ENCODE measurements at regions of chr12 and their contacts with region 1.

Region 1: DNA sequence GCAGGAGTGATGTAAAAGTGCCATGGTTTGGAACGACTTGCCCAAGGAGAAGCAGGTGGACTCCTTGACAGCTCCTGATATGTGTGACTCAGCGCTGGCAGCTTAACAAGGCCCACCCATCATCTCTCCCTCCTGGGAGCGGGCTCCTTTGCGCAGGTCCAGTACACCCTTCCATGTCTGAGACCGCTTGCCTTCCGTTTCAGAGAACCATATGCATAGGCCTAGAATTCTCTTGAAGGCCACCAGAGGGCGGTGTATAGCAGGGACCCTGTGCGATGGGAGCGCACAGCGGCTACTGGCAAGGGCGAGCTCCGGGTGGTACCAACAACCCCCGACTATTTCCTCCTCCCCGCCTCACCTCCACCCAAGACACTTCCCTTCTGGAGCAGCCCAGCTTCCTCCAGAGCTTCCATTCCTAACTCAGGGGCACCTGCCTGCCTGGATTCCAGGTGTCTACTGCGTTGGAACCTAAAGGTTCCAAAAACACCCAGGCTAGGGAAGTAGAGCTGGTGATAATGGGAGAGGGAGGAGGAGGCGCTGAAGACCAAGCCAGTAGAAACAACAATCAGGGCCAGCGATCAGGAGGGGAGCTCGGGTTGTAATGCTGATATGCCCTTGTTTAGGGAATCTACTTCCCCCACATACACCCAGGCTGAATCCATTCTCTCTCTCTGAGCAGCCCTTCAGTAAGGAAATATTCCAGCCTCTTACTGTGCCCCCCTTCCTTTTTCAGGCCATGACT is 6.2 kb downstream of the DHH start:
- DNase-seq: peak; percentile 67
- H3K4me3 Mint-ChIP-seq: peak overlapping the region; percentile 42
- H3K27ac Mint-ChIP-seq: no peak overlapping the region
- H3K4me1 Mint-ChIP-seq: peaks cover 57% of the 10 kb centered on the region
- H3K27me3 Mint-ChIP-seq: peaks cover 38% of the 10 kb centered on the region

Region 2: DNA sequence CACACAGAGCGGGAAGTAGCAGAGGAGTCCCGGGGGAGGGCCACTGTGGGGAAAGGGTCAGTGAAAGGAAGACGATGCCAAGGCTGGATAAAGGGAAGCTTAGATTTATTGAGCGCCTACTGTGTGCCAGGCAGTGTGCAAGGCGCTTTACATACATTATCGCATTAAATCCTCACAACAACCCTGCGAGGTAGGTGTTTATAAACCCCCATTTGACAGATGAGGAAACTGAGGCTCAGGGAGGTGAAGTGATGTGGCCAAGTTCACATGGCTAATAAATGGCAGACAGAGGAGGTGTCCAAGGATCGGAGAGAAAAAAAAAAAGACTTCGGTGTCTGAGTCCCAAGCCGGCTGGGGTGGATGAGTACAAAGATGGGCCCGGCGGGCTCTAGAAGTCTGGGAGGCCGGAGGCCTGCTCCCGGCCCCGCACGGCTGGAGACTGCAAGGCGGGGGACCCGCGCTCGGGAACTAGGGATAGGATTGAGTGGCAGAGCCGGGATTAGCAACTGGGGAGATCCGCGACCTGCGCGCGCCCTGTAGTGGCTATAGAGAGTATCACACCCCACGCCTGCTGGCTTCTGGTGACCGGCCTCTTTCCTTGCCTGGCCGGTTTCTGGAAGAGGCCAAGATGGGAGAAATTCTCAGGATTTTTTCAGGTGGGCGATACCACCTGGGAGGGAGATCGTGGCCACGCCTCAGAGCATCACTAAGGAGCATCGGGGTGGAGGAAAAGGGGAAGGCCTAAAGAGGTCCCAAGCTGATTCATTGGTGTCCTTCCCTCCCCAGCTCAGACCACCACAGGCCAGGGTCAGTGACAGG is 93.1 kb before region 1 on chr12:
- intact Hi-C with region 1: loop called (anchors 1 kb)
- DNase-seq: peak; percentile 39
- H3K4me3 Mint-ChIP-seq: no peak overlapping the region
- H3K27ac Mint-ChIP-seq: peak overlapping the region; percentile 52
- H3K4me1 Mint-ChIP-seq: peaks cover 25% of the 10 kb centered on the region
- H3K27me3 Mint-ChIP-seq: peaks cover 49% of the 10 kb centered on the region

Region 3: DNA sequence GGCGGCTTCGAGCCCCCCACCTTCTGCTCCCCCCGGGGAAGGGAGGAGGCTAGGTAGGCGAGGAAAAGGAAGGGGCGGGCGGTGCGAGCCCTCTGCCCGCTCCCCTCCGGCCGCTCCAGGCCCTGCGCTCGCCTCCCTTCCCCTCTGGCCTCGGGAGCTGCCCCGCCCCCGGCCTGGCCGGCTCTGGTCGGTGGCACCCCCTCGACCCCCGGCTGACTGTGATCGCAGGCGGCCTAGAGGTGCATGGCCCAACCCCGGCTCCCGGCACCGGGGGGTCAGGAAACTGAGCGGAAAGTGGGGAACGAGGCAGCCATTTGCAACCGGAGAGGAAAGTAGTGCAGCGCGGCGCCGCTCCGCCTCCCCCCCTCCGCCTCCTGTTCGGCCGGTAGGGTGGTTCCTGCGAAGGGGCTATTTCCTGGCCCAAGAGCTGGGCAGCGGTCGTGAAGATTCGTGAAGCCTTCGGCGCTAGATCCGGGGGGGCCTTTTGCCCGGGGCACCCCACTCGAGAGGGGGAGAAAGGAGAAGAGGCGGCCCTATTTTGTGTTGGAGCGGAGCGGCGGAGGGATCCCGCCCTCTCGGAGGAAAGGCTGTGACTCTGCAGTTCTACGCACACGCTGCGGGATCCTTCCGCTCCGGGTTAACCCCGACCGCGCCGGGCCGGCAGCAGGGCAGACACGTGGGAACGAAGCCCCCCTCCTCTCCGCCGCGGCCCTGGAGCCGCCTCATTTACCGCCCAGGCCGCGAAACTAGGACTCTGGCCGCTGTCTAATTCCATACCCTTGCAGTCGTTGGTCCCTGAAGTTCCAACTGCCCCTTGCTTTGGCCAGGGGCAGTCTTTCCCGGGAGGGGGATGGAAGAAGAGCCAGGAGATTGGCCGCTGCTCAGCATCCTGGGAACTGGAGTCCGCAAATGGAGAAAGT is 27.9 kb before region 1 on chr12 and contains the start of gene KMT2D:
- intact Hi-C with region 1: loop called (anchors 1 kb)
- DNase-seq: peak; percentile 83
- H3K4me3 Mint-ChIP-seq: peak within 1 kb of the TSS; percentile 95
- H3K27ac Mint-ChIP-seq: peak within 1 kb of the TSS; percentile 95
- H3K4me1 Mint-ChIP-seq: peaks cover 48% of the 10 kb centered on the region
- H3K27me3 Mint-ChIP-seq: no peaks in the 10 kb centered on the region
- total RNA-seq, gene KMT2D: 107 and 109 TPM in 2 replicates

Region 4: GRCh38 chr12:49069507-49070346 is 18.6 kb before region 1 on chr12 and contains the start of gene RHEBL1:
- intact Hi-C with region 1: loop called (anchors 1 kb)
- DNase-seq: peak; percentile 100
- H3K4me3 Mint-ChIP-seq: peak within 1 kb of the TSS; percentile 100
- H3K27ac Mint-ChIP-seq: peak within 1 kb of the TSS; percentile 97
- H3K4me1 Mint-ChIP-seq: peaks cover 26% of the 10 kb centered on the region
- H3K27me3 Mint-ChIP-seq: no peaks in the 10 kb centered on the region
- total RNA-seq, gene RHEBL1: 8.6 and 10.7 TPM in 2 replicates

Region 5: DNA sequence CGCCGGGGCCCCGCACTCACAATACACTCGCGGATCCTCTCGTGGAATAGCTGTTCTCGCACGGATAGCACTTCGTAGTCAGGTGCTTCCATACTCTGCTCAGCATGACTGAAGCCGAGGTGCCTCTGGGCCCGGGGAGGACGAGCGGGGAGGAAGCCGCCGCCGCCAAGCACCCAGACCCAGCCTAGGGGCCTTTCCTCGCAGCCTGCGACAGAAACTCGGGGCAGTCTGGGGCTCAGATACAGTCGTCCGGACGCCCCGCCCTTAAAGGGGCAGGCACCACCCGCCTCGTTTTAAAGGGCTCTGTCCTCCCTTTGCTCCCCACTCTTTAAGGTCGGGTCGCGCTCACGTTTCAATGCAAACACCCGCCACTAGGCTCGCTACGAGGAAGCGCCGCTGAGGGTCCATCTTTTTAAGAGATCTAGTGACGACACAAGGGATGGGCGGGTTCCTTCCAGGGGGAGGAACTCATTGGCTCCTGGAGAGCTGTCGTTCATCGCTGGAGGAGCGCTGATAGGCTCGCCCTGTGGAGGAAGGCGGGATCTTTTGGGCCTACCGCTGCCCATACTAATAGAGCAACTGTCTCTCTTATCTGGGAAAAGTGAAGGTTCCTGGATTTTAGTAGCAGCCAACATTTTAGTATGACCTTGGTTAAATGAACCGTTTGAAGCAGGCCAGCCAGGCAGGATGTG is 22.2 kb after region 1 on chr12 and contains the start of gene LMBR1L:
- intact Hi-C with region 1: loop called (anchors 1 kb)
- DNase-seq: peak; percentile 93
- H3K4me3 Mint-ChIP-seq: peak within 1 kb of the TSS; percentile 93
- H3K27ac Mint-ChIP-seq: peak within 1 kb of the TSS; percentile 92
- H3K4me1 Mint-ChIP-seq: peaks cover 37% of the 10 kb centered on the region
- H3K27me3 Mint-ChIP-seq: no peaks in the 10 kb centered on the region
- total RNA-seq, gene LMBR1L: 50.4 and 52.5 TPM in 2 replicates

Region 6: DNA sequence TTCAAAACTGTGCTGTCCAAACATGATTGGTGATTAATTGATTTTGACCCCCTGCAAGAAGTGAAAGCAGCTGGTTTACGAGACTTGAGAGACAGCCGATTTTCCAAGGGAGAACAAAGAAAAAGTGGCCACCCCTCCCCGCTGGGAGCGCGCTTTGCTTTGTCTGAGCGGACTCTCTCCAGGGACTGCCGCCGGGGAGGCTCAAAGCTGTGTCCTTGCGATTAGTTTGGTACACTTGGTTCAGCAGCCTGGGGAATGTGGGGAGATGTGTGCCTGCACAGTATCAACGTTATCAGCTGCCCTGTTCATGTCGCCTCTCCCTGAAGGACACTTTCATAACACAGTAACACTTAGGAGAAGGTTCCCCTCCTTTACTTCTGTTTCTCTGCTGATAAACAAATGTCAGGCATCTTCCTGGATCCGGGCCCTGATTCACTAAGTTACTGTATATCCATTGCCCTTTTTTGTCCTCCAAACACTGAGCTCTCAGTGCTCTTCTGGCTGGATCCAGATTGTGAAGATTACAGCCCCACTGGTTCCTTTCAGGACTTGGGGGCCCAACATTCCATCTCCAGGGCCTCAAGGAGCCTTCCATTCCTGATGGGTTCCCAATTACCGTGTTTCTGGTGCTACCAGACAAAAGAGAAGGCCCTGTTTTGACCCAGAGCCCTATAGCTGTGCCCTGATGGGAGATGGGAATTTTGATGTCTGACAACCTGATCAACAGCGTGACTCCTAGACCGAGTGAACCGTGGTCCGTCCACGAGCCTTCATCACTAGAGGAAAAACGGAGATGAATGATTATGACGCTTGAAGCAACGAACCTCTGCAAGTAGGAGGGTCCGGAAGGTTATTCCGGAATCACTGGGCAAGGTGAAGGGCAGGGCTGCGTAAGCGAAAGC is 144.8 kb after region 1 on chr12:
- intact Hi-C with region 1: loop called (anchors 1 kb)
- DNase-seq: no peak
- H3K4me3 Mint-ChIP-seq: peak overlapping the region; percentile 67
- H3K27ac Mint-ChIP-seq: peak overlapping the region; percentile 73
- H3K4me1 Mint-ChIP-seq: peaks cover 9% of the 10 kb centered on the region
- H3K27me3 Mint-ChIP-seq: peaks cover 13% of the 10 kb centered on the region

Region 7: DNA sequence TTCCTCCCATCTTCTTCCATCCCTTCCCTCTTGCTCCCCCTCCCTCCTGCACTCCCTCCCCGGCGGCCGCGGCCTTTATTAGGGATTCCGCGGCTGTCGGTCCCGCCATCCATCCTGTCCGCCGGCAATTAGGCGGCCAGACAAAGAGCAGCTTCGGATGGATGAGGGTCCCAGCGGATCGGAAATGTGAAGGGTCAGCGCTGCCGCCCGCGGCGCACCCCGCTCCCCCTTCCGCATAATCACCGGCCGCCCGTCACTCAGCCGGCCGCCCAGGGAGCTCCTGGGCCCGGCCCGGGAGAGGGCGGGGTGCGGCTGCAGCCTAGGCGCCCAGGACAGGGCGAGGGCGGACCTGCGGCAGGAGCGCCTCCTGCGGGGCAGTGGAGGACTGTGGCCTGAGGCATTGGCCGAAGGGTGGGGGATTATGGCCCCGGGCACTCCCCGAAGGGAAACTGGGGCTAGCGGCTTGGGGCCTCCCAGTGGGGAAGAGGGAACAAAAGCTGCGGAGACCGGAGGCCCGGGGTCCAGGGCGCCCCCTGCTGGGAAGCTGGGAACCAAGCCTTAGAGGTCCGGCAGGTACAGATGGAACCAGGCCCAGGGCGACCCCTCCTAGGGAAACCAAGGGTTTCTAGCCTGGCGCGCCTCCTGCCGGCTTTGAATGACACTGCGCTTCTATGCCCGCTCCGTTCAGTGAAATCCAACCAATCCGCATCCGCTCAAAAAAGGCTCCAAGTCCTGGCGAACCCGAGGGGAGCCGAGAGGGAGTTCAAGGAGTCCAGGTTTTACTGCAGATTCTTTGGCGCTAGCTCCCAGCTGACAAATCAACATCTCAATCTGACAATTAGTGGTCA is 253.9 kb after region 1 on chr12:
- intact Hi-C with region 1: loop called (anchors 5 kb)
- DNase-seq: peak; percentile 56
- H3K4me3 Mint-ChIP-seq: peak overlapping the region; percentile 37
- H3K27ac Mint-ChIP-seq: no peak overlapping the region
- H3K4me1 Mint-ChIP-seq: peaks cover 35% of the 10 kb centered on the region
- H3K27me3 Mint-ChIP-seq: peaks cover 77% of the 10 kb centered on the region